A673 (cell line): ENCODE measurements at regions of chr6 and their contacts with region 1.

Region 1: DNA sequence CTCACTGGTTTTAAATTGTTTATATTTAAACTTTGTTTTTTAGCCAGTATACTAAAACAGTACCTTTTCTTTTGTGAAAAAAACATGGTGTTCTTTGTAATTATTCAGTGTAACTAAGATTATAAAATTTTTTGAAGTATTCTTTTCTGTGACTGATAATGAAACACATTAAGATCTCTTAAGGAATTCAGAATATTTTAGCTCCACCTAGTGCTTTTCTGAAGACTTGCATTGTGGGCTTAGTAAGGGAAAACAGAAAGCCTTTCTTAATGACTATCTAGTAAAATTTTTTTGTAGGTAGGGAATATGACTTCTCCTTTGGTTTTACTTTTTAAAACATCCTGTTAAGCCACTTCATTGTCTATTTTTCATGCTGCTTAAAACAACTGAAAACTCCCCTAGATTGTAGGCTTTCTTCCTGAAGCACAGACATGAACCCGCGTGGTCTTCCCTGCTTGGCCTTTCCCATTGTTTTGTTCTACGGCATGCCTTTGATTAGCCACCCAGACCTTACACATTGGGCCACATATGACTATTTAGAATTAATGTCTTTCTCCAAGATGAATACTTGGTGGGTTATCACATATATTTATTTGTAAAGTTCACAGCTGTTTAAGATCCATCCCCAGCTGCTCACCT is 72.1 kb downstream of the AFDN start:
- DNase-seq: peak; percentile 73
- H3K4me3 ChIP-seq: no peak overlapping the region
- H3K27ac ChIP-seq: no peak overlapping the region
- H3K4me1 ChIP-seq: no peaks in the 10 kb centered on the region
- H3K27me3 ChIP-seq: no peaks in the 10 kb centered on the region
- CTCF ChIP-seq: peak; percentile 84

Region 2: DNA sequence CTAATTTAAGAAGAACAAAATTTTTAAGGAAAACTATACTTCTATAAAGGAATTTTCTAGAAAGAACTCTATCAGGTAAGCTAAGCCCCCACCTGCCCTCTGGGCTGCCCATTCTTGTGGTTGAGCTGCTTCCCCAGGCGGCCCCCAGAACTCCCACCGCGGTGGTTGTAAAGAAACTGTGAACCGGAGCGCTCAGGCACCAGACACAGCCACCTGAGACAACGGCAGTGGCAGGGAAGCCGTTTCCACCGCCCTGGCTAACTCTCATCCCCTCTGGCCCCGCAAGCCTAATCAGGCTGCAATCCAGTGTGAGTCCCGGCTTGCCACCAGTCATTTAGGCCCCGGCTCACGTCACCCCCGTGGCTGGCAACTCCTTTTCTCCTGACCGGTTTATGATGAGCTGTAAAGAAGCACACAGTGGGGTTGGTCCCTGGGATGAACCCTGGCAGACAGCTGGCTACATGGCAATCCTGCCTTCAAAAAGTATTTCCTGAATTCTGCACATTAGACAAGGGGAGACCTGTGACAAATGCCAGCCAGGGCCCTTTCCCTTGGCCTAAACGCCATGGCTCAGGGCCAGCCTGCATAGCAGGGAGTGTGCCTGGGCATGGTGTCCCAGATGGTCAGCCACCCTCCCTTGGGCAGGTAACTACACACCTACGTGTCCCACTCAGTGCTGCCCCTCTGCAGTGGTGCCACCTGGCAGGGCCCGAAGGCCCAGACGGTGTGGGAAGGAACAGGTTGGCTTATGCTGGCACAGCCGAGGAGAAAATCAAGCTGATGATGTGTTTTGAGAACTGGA is 677.2 kb before region 1 on chr6:
- CTCF ChIA-PET with region 1: no interaction called
- POLR2A ChIA-PET with region 1: no interaction called
- intact Hi-C with region 1: loop called (anchors 10 kb)
- DNase-seq: no peak
- H3K4me3 ChIP-seq: no peak overlapping the region
- H3K27ac ChIP-seq: no peak overlapping the region
- H3K4me1 ChIP-seq: no peaks in the 10 kb centered on the region
- H3K27me3 ChIP-seq: no peaks in the 10 kb centered on the region
- CTCF ChIP-seq: no peak

Region 3: GRCh38 chr6:167396659-167397490 is 501.9 kb before region 1 on chr6:
- CTCF ChIA-PET with region 1: no interaction called
- POLR2A ChIA-PET with region 1: no interaction called
- intact Hi-C with region 1: loop called (anchors 10 kb)
- DNase-seq: no peak
- H3K4me3 ChIP-seq: no peak overlapping the region
- H3K27ac ChIP-seq: no peak overlapping the region
- H3K4me1 ChIP-seq: no peaks in the 10 kb centered on the region
- H3K27me3 ChIP-seq: no peaks in the 10 kb centered on the region
- CTCF ChIP-seq: no peak

Region 4: DNA sequence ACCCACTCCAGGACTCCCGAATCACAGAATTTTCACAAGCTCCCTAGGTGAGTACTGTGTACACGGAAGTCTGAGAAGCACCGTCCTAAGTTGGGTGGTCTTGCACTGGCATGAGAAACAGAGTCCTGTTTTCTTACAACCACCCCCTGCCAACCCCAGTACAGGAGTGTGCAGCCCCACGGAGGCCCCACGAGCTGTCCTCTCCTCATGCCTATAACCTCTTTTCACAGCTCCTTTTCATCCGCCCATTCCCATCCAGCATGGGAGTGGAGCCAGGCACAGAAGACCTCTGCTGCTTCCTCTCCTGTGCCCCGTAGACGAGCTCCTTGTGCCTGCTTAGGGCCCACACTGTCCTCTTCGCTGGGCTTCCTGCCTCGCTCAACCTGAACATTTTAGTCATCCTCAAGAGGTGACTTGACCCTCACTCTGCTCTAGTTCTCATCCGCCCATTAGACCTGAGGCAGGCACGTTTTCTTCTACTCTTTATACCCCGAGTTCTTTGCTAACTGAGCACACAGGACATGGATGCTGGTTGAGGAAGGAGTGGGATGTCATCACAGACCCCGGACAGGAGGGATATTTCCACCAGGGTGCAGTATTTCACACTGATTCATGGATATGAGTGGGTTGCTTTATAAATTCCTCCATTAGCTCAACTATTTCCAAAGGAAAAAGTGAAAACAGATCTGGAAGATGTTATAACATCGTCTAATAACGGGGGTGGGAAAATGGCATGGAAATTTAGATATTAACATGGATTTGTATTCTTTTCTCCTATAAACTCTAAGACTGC is 413.4 kb before region 1 on chr6:
- CTCF ChIA-PET with region 1: interaction called, 4 read pairs
- POLR2A ChIA-PET with region 1: no interaction called
- intact Hi-C with region 1: loop called (anchors 1 kb)
- DNase-seq: peak; percentile 72
- H3K4me3 ChIP-seq: no peak overlapping the region
- H3K27ac ChIP-seq: no peak overlapping the region
- H3K4me1 ChIP-seq: no peaks in the 10 kb centered on the region
- H3K27me3 ChIP-seq: no peaks in the 10 kb centered on the region
- CTCF ChIP-seq: peak; percentile 75

Region 5: DNA sequence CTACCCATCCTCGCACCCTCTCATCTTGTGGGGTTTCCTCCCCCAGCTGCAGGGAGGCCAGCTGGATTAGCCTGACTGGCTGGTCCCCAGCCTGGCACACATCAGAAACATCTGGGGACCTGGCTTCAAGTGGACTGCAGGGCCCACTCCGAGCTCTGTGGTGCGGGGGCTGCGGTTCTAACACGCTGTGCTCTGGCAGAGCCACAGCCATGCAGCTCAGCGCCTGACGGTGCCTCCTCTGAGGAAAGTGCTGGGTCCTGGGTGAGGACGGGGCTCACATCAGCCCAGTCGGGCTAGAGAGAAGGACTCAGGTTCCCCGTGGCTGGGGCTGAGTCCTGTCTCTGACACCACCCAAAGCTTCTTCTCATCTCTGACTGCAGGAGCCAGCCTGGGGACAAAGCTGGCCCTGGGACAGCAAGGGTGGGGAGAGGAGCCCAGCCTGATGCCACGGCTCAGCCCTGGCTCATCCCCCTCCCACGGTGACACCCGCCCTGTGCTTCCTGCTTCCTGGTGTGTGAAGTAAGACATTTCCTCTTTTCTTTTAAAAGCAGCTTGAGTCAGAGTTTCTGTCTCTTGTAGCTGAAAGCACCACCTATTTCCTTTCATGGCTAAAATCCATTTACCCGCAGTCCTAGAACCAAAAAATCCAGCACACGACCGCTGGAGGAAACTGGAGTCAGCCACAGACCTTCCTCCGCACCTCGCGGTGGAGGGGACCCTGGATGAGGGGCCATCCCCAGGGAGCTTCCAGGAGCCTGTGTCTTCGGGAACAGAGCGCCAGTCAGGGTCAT is 199.5 kb before region 1 on chr6:
- CTCF ChIA-PET with region 1: no interaction called
- POLR2A ChIA-PET with region 1: no interaction called
- intact Hi-C with region 1: loop called (anchors 10 kb)
- DNase-seq: peak; percentile 97
- H3K4me3 ChIP-seq: peak overlapping the region; percentile 19
- H3K27ac ChIP-seq: peak overlapping the region; percentile 88
- H3K4me1 ChIP-seq: peaks cover 37% of the 10 kb centered on the region
- H3K27me3 ChIP-seq: no peaks in the 10 kb centered on the region
- CTCF ChIP-seq: no peak

Region 6: DNA sequence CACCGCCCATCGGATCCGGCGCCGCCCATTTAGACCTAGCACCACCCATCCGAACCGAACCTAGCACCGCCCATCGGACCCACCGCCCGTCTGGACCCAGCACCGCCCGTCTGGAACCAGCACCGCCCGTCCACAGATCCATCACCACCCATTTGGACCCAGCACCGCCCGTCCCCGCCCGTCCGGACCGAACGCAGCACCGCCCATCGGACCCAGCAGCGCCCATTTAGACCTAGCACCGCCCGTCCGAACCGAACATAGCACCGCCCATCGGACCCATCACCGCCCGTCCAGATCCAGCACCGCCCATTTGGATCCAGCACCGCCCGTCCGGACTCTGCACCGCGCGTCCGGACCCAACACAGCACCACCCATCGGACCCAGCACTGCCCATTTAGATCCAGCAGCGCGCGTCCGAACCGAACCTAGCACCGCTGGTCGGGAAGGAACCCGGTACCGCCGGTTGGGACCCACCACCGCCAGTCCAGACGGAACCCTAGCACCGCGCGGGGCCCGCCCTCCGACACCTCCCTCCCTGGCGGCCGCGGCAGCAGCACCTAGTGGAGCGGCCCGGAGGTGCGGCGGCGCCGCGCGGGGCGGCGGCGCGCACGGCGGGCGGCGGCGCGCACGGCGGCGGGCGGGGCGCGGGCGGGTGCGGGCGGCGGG is 72.4 kb before region 1 on chr6:
- CTCF ChIA-PET with region 1: no interaction called
- POLR2A ChIA-PET with region 1: no interaction called
- intact Hi-C with region 1: loop called (anchors 5 kb)
- DNase-seq: peak; percentile 80
- H3K4me3 ChIP-seq: peak overlapping the region; percentile 97
- H3K27ac ChIP-seq: peak overlapping the region; percentile 53
- H3K4me1 ChIP-seq: peaks cover 28% of the 10 kb centered on the region
- H3K27me3 ChIP-seq: no peaks in the 10 kb centered on the region
- CTCF ChIP-seq: peak; percentile 43